HepG2 (cell line): ENCODE measurements at regions of chr1 and their contacts with region 1.

Region 1: GRCh38 chr1:40862008-40862863 is at the start of gene CITED4:
- DNase-seq: peak; percentile 88
- ATAC-seq: peak; percentile 87
- H3K4me3 ChIP-seq: peak within 1 kb of the TSS; percentile 38 to 76 (median 52)
- H3K27ac ChIP-seq: peak within 1 kb of the TSS; percentile 47
- H3K4me1 ChIP-seq: peaks cover 40% of the 10 kb centered on the region
- H3K27me3 ChIP-seq: peaks cover 2 to 32% of the 10 kb centered on the region in 2 experiments; a peak in 4 of 5 replicates
- CTCF ChIP-seq: peak; percentile 89
- EP300 ChIP-seq: no peak
- POLR2A ChIP-seq: peak; percentile 97 to 99
- RAD21 ChIP-seq: peak; percentile 57; the same call in 1 of the 2 replicates
- total RNA-seq, gene CITED4: 5.8 and 9.9 TPM in 2 replicates

Region 2: DNA sequence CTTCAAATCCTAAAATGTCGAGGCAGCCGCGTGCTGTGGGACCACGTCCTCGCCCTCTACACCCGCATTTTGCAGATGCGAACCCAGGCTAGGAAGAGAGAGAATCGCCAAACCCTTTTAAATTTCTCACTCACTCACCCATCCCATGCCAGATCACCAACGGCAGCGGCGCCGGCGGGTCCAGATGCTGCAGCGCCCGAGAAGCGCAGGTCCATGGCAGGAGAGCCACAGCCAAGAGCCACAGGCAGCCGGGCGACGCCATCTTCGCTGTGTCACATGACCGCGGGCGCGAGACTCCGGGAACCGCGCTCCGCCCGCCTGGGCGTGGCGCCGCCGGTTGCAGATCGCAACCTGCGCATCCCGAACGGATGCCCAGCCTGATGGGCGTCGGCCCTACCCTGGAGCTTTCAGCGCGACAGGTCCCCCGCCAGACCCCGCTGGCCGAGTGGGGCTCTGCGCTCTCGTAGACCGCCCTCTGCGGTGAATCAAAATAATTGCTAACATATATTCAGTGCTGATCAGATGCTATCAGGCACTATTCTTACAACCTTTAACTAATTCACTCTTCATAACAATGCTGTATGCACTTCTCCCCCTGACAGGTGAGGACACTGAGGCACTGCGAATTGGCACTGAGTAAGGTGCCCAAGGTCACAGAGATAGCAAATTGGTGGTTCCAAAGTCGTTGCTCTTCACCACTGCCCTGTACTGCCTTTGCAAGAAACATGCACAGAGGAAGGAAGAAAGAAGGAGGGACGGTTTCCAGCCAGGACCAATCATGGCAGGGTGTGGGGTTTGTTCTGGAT is 765.1 kb before region 1 on chr1 and contains the start of gene PPT1:
- CTCF ChIA-PET with region 1: no interaction called
- POLR2A ChIA-PET with region 1: no interaction called
- in situ Hi-C with region 1: no loop called
- intact Hi-C with region 1: no loop called
- DNase-seq: peak; percentile 56
- ATAC-seq: peak; percentile 98
- H3K4me3 ChIP-seq: peak within 1 kb of the TSS; percentile 62 to 84 (median 73)
- H3K27ac ChIP-seq: peak within 1 kb of the TSS; percentile 14
- H3K4me1 ChIP-seq: peaks cover 37% of the 10 kb centered on the region
- H3K27me3 ChIP-seq: peaks cover 0 to 4% of the 10 kb centered on the region in 2 experiments; a peak in 1 of 5 replicates
- CTCF ChIP-seq: peak; percentile 18
- EP300 ChIP-seq: no peak
- POLR2A ChIP-seq: peak; percentile 77 to 90
- RAD21 ChIP-seq: no peak
- total RNA-seq, gene PPT1: 79.5 and 129 TPM in 2 replicates

Region 3: GRCh38 chr1:40876891-40877290 is 14.7 kb after region 1 on chr1:
- CTCF ChIA-PET with region 1: no interaction called
- POLR2A ChIA-PET with region 1: interaction called, 11 read pairs
- in situ Hi-C with region 1: no loop called
- intact Hi-C with region 1: no loop called
- DNase-seq: no peak
- ATAC-seq: no peak
- H3K4me3 ChIP-seq: no peak overlapping the region
- H3K27ac ChIP-seq: no peak overlapping the region
- H3K4me1 ChIP-seq: 0 out of 2 replicates have a peak, but pooled peaks cover 7% of the 10 kb centered on the region
- H3K27me3 ChIP-seq: peaks cover 1 to 6% of the 10 kb centered on the region in 2 experiments; a peak in 2 of 5 replicates
- CTCF ChIP-seq: no peak
- EP300 ChIP-seq: no peak
- POLR2A ChIP-seq: no peak
- RAD21 ChIP-seq: no peak

Region 4: DNA sequence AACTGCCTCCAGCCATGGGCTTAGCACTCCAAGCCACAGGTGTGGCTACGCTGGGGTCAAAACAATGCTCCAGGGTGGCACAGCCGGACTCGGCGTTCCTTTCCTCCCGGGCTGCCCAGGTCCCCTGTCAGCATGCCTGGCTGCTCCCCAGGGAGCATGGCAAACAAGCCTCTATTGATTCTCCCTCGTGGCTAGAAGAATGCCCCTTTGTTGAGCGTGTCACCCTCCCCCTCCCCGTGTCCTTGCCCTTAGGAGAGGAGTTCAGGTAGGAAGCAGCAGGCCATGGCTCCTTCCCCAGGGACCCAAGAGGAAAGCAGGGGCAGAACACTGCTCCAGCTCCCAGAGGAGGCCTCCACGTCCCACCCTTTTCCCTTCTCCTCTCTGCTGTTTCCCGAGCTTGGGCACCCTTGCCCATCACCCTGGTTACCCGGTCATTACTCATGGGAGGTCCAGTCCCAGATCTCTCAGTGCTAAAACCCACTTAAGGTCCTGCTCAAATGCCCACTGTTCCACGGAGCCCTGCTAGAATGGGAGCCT is 57.3 kb after region 1 on chr1:
- CTCF ChIA-PET with region 1: no interaction called
- POLR2A ChIA-PET with region 1: interaction called, 19 read pairs
- in situ Hi-C with region 1: no loop called
- intact Hi-C with region 1: no loop called
- DNase-seq: peak; percentile 97
- ATAC-seq: peak; percentile 96
- H3K4me3 ChIP-seq: peak overlapping the region in 1 of 3 experiments; percentile 8; a peak in 2 of 6 replicates
- H3K27ac ChIP-seq: peak overlapping the region; percentile 91
- H3K4me1 ChIP-seq: peaks cover 96% of the 10 kb centered on the region
- H3K27me3 ChIP-seq: no peaks in the 10 kb centered on the region
- CTCF ChIP-seq: peak; percentile 36; the same call in 1 of the 2 replicates
- EP300 ChIP-seq: peak; percentile 96 to 99
- POLR2A ChIP-seq: peak; percentile 51 to 79; a peak in 3 of 4 replicates
- RAD21 ChIP-seq: peak; percentile 63

Region 5: GRCh38 chr1:40939320-40940059 is 77.3 kb after region 1 on chr1:
- CTCF ChIA-PET with region 1: no interaction called
- POLR2A ChIA-PET with region 1: interaction called, 41 read pairs
- in situ Hi-C with region 1: no loop called
- intact Hi-C with region 1: no loop called
- DNase-seq: peak; percentile 95
- ATAC-seq: peak; percentile 99
- H3K4me3 ChIP-seq: peak overlapping the region in 2 of 3 experiments; percentile 32 to 52; a peak in 3 of 6 replicates
- H3K27ac ChIP-seq: peak overlapping the region; percentile 76
- H3K4me1 ChIP-seq: peaks cover 57% of the 10 kb centered on the region
- H3K27me3 ChIP-seq: no peaks in the 10 kb centered on the region
- CTCF ChIP-seq: 0 out of 2 replicates have a peak, but pooled peaks have one; percentile 17
- EP300 ChIP-seq: peak; percentile 87 to 90; a peak in 3 of 4 replicates
- POLR2A ChIP-seq: peak; percentile 23 to 54; a peak in 1 of 4 replicates
- RAD21 ChIP-seq: peak; percentile 36; the same call in 1 of the 2 replicates

Region 6: GRCh38 chr1:40951943-40952743 is 89.9 kb after region 1 on chr1:
- CTCF ChIA-PET with region 1: interaction called, 7 read pairs
- POLR2A ChIA-PET with region 1: interaction called, 93 read pairs
- in situ Hi-C with region 1: no loop called
- intact Hi-C with region 1: loop called (anchors 1 kb)
- DNase-seq: peak; percentile 61
- ATAC-seq: peak; percentile 83
- H3K4me3 ChIP-seq: no peak overlapping the region; a peak in 1 of 6 replicates
- H3K27ac ChIP-seq: no peak overlapping the region
- H3K4me1 ChIP-seq: peaks cover 29% of the 10 kb centered on the region
- H3K27me3 ChIP-seq: peaks cover 0 to 15% of the 10 kb centered on the region in 2 experiments; a peak in 2 of 5 replicates
- CTCF ChIP-seq: peak; percentile 98
- EP300 ChIP-seq: no peak
- POLR2A ChIP-seq: no peak
- RAD21 ChIP-seq: peak; percentile 99

Region 7: GRCh38 chr1:40979233-40980067 is 117.2 kb after region 1 on chr1 and contains the start of gene CTPS1:
- CTCF ChIA-PET with region 1: no interaction called
- POLR2A ChIA-PET with region 1: interaction called, 13 read pairs
- in situ Hi-C with region 1: no loop called
- intact Hi-C with region 1: no loop called
- DNase-seq: peak; percentile 84
- ATAC-seq: peak; percentile 96
- H3K4me3 ChIP-seq: peak within 1 kb of the TSS; percentile 51 to 73 (median 69)
- H3K27ac ChIP-seq: peak within 1 kb of the TSS; percentile 98
- H3K4me1 ChIP-seq: peaks cover 49% of the 10 kb centered on the region
- H3K27me3 ChIP-seq: no peaks in the 10 kb centered on the region
- CTCF ChIP-seq: peak; percentile 20; the same call in 1 of the 2 replicates
- EP300 ChIP-seq: no peak
- POLR2A ChIP-seq: peak; percentile 75 to 84
- RAD21 ChIP-seq: no peak; the same call in 1 of the 2 replicates
- total RNA-seq, gene CTPS1: 42.8 and 63.1 TPM in 2 replicates